ENCODE measurements at regions of chrX and their contacts with region 1.

Region 1: DNA sequence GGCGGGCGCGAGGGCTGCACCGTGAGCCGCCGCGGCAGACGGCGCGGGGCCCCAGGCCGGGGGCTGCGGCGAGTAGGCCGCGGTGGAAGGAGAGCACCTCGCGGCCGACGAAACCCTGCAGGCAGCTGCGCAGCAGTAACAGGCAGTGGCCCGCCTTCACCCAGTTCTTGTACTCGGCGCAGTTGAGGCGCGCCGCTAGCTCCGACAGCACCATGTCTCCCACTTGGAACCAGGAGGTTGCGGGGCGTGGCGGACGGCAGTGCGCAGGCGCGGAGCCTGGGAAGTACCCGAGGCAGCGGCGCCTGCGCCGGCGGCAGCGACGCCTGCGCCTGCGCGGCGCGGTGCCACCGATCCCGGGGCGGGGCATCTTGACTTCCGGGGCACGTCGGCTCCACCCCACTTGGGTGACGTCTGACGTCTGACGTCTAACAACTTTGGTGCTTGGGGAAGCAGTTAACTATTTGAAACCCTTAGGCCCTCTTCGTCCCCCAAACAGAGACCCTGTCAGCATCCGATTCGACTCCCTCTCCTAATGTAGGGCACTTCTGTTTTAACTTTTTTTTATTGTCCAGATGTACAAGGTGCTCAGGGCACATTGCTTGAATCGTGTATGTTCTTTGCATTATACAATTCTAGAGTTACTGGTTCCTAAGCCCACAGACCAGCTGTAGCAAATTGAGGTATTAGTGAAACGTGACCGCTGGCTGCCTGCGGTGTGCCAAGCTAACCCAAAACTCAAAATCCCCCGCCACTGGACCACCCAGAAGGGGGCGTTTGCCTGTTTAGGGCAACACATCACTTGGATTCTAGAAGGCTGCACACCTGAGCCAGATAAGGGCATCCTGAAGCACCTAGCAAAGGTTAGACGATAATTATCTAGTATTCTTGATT is at the start of gene CXorf38:
- DNase-seq: peak; percentile 93
- H3K4me3 ChIP-seq: peak within 1 kb of the TSS; percentile 80
- H3K27ac ChIP-seq: peak within 1 kb of the TSS; percentile 71
- H3K4me1 ChIP-seq: no peaks in the 10 kb centered on the region
- H3K27me3 ChIP-seq: no peaks in the 10 kb centered on the region
- CTCF ChIP-seq: peak; percentile 21; the same call in 1 of the 2 replicates
- total RNA-seq, gene CXorf38: 8.1 and 10.1 TPM in 2 replicates

Region 2: GRCh38 chrX:40792433-40792832 is 144.9 kb after region 1 on chrX:
- CTCF ChIA-PET with region 1: interaction called, 15 read pairs
- POLR2A ChIA-PET with region 1: no interaction called
- intact Hi-C with region 1: loop called (anchors 2 kb)
- DNase-seq: no peak
- H3K4me3 ChIP-seq: no peak overlapping the region
- H3K27ac ChIP-seq: no peak overlapping the region
- H3K4me1 ChIP-seq: peaks cover 8% of the 10 kb centered on the region
- H3K27me3 ChIP-seq: no peaks in the 10 kb centered on the region
- CTCF ChIP-seq: no peak

Region 3: GRCh38 chrX:40933132-40933705 is 285.7 kb after region 1 on chrX:
- CTCF ChIA-PET with region 1: no interaction called
- POLR2A ChIA-PET with region 1: no interaction called
- intact Hi-C with region 1: loop called (anchors 5 kb)
- DNase-seq: peak; percentile 84
- H3K4me3 ChIP-seq: peak overlapping the region; percentile 8
- H3K27ac ChIP-seq: peak overlapping the region; percentile 73
- H3K4me1 ChIP-seq: peaks cover 29% of the 10 kb centered on the region
- H3K27me3 ChIP-seq: no peaks in the 10 kb centered on the region
- CTCF ChIP-seq: no peak

Region 4: DNA sequence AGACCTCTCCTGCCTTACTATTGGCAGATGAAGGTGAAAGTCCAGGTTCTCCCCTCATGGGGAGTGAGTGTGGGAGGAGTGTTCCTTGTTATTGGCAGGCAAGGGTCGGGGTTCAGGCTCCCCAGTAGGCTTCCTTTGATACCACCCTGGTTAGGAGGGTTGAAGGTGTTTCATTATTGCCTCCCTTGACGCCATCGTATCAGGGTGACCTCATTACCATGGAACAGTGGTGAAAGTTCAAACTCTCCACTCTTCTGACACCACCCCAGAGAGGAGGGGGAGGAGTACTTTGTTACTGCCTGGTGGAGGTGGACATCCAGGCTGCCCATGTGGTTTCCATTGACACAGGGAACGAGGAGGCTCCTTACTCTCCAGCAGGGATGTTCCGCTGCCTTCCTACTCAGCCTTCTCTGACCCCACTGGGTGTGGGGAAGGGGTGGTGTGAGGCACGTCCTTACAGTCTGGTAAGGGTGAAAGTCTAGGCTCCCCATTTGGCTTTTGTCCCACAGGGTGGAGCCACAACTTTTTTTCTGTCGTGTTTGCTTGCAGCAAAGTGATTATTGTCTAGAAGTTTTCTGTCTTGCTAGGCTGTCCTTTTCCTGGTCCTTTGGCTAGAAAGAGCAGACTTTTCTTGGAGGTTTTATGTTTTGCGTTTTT is 400.5 kb after region 1 on chrX:
- CTCF ChIA-PET with region 1: no interaction called
- POLR2A ChIA-PET with region 1: no interaction called
- intact Hi-C with region 1: no loop called
- DNase-seq: no peak
- H3K4me3 ChIP-seq: no peak overlapping the region
- H3K27ac ChIP-seq: no peak overlapping the region
- H3K4me1 ChIP-seq: peaks cover 2% of the 10 kb centered on the region
- H3K27me3 ChIP-seq: no peaks in the 10 kb centered on the region
- CTCF ChIP-seq: no peak

Region 5: GRCh38 chrX:41116948-41117347 is 469.4 kb after region 1 on chrX:
- CTCF ChIA-PET with region 1: interaction called, 9 read pairs
- POLR2A ChIA-PET with region 1: interaction called, 4 read pairs
- intact Hi-C with region 1: loop called (anchors 1 kb)
- DNase-seq: peak; percentile 25
- H3K4me3 ChIP-seq: peak overlapping the region; percentile 14
- H3K27ac ChIP-seq: no peak overlapping the region
- H3K4me1 ChIP-seq: peaks cover 31% of the 10 kb centered on the region
- H3K27me3 ChIP-seq: no peaks in the 10 kb centered on the region
- CTCF ChIP-seq: no peak

Measured in A673 (cell line).